ENCODE measurements at regions of chr21 and their contacts with region 1.

Region 1: DNA sequence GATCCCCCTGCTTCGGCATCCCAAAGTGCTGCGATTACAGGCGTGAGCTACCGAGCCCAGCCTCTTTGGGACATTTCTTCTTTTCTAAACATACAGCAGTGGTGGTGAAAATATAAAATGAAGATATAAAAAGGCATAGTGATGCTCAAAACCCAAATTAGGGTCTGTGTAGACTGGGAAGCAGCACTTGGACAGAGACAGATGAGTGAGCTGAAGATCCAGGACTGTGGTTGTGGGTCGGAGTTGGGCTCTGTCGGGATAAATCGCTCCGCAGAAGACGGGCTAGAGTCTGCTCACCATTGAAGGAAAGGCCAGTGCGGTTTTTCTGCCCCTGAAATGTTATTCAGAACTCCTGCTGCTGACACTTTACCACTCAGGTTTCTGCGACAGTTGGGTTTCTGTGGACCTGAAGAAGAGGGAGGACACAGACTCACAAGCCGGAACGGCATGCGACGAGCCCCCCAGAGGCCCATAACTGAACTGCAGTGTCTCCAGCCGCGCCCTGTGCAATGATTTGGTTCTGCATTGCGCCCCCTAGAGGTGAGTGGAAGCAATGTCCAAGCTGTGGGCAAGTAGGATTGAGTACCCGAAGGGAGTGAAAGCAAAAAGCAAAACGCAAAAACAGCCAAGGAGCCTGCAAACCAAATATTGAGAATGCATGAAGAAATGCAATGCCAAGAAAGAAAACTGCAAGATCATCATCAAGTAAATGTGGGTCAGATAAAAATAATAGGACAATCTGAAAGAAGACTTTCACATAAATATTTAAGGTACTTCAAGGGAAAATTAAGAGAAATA is 66.6 kb downstream of the GABPA start:
- DNase-seq: peak; percentile 87
- CTCF ChIP-seq: peak; percentile 99

Region 2: DNA sequence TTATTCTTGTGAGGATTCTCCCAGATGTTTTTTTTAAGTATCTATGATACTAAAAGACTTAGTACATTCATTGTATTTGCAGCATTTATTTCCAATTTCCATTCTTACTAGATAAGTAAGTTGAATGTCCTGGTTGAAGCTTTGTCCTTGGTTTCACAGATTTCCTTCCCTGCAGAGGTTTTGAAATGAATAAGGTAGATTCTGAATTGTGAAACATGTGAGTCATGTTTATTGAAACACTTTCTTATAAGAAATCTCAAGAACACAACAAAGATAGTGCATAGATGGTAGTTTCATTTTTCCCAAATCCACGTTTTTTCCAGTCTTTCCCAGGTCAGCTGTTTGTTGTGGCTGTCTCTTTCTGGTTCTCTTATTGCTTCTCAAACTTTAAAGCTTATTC is 41.8 kb before region 1 on chr21:
- CTCF ChIA-PET with region 1: interaction called, 11 read pairs
- POLR2A ChIA-PET with region 1: no interaction called
- DNase-seq: no peak
- CTCF ChIP-seq: no peak

Region 3: DNA sequence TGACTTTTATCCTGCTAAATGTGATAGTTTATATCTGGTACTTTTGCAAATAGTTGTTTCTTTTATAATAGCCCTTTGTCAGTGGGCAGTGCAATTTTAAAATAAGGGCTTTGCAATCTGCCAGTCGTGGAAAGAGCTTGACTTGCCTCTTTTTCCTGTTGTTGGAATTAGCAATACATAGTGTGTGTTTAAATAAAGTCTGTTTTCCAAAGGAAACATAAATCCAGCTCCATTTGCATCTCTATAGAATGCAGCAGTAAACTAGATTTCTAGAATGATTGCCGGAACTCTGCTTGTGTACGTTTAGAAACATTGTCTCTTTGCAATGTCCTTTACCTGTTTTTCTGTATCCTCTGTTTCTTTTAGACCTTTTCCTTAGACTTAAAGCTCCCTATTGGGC is 33.5 kb before region 1 on chr21:
- CTCF ChIA-PET with region 1: interaction called, 15 read pairs
- POLR2A ChIA-PET with region 1: no interaction called
- DNase-seq: no peak
- CTCF ChIP-seq: no peak

Region 4: DNA sequence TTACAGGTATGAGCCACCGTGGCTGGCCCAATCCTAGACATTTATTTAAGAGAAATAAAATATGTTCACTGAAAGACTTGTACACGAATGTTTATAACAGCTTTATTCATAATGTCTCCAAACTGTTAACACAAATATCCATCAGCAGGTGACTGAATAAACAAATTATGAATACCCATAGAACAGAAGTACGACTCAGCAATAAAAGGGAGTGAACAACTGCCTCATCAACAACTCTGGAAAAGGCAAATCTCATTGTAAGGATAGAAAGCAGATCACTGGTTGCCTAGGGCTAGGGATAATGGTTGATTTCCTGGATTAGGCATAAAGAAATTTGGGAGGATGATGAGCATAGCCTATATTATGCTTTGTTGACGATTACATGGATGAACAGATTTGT is 25.0 kb before region 1 on chr21:
- CTCF ChIA-PET with region 1: interaction called, 26 read pairs
- POLR2A ChIA-PET with region 1: no interaction called
- DNase-seq: no peak
- CTCF ChIP-seq: no peak

Region 5: DNA sequence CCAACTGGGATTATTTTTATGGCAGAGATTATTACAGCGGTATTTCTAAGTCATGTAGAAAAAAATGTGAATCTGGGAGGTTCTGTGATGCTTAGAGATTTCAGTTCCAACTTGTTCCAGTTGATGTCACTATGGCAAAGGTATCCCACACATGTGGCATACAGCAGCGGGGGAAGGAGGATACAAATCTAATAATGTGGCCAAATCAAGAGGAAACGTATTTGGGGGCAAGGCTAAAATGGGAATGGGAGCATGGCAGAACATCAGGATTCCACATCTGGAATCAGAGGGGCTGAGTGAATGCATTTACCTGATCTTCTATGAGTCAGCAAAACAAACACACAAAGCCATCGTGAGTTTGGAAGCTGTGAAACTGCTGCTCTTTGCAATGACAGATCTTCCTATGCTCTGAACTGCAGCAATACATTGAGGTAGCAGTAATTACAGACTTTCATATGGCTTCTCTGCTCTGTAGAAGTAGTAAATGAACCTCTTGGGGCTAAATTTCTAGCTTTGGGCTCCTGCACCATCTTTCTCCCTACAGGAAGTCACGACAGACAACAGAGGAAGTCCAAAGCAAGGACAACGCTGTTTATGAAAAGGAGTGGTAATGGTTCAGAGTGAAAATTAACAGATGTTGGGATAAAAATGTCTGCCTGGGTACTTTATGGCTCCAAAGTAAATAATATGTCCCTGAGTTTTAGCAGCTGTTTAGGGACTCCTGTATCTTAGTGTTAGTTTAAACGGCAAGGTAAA is 11.1 kb before region 1 on chr21:
- CTCF ChIA-PET with region 1: interaction called, 27 read pairs
- POLR2A ChIA-PET with region 1: no interaction called
- DNase-seq: peak; percentile 17
- CTCF ChIP-seq: peak; percentile 19

Region 6: DNA sequence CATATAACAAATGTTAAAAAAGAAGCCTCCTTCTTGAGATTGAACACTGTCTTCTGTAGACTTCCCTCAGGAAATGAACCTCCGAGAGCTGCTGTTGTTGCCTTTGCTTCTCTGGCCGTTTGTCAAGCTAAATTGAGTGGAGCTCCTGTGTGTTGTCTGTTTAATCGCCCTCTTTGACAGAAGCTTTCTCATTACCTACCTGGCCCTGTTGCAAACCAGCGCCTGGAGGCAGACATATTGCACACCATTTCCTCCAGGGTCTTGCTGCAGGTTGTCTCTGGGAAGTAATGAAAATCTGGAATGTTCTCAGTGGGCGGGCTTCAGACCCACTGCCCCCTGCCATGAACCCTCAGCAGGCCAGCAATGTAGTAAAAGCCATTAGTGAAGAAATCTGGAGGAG is 16.7 kb after region 1 on chr21:
- CTCF ChIA-PET with region 1: interaction called, 19 read pairs
- POLR2A ChIA-PET with region 1: no interaction called
- DNase-seq: no peak
- CTCF ChIP-seq: no peak